ENCODE measurements at regions of chr11 and their contacts with region 1.

Region 1: DNA sequence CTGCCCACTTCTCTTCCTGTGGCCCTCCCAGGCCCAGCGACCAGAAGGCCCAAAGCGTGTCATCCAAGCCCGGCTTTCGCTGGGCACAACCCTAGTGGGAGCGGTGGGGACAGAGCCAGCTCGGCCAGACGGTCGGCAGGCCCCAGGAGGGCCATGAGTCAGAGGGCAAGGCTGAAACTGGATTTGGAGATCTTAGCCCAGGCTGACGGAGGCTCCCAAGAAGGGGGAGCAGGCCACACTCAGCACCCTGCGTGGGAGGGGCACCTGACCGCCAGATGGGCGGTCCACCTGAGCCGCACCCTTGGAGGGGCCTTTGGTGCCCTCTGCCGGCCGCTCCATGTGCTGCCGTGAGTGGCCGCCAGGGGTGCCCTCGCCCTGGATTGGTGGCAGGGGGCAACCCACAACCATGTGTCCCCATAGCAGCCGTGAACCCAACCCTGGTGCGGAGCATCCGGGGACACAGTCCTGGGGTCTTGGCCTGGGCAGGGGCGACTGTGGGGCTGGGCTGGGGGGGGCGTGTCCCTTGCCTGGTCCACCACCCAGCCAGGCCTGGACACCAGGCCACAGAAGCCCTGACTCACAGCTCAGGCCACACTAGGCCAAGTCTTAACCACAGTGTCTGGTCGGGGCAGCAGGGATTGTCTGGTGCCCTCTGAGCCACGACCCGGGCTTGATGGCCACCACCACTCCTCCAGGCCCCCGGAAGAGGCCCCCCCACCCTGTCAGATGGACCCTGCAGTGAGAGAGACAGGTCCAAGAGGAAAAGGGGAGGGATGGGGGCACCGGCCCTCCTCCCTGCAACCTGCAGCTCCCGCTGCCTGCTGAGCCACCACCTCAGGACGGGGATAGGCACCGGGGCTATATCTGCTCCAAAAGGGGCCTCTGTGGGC is 19.2 kb upstream of the TALDO1 start:
- DNase-seq: peak; percentile 79
- ATAC-seq: peak; percentile 85
- H3K4me3 Mint-ChIP-seq: no peak overlapping the region
- H3K27ac Mint-ChIP-seq: no peak overlapping the region
- H3K4me1 Mint-ChIP-seq: peaks cover 8% of the 10 kb centered on the region
- H3K27me3 Mint-ChIP-seq: peaks cover 5% of the 10 kb centered on the region
- CTCF ChIP-seq: peak; percentile 91

Region 2: DNA sequence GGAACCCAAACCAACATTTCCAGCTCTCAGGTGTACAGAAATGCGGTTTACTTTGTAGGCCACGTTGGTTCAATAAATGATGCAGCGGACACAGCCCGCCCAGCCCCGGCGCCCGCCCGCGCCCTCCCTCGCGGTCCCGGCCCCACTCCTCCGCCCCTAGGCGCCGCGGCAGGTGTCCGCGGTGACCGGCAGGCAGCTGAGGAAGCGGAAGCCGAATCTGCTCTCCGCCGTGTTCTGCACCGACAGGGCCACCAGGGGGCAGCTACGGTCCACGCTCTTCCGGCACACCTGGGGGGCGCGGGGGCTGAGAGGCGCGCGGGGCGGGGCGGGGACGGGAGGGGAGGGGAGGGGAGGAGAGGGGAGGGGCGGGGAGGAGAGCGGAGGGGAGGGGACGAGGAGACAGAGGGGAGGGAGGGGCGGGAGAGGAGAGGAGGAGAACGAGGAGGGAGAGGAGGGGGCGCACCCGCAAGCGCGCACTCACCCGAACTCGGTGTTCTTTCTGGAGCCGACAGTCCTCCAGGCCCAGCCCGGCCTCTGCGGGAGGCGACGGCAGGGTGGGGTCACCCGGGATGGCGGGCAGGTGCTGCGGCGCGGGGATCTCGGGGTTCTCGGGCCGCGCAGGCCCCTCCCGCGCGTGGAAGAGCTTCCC is 173.2 kb before region 1 on chr11:
- CTCF ChIA-PET with region 1: interaction called, 24 read pairs
- POLR2A ChIA-PET with region 1: interaction called, 11 read pairs
- intact Hi-C with region 1: loop called (anchors 1 kb)
- DNase-seq: peak; percentile 70
- ATAC-seq: peak; percentile 93
- H3K4me3 Mint-ChIP-seq: peak overlapping the region; percentile 24
- H3K27ac Mint-ChIP-seq: no peak overlapping the region
- H3K4me1 Mint-ChIP-seq: peaks cover 6% of the 10 kb centered on the region
- H3K27me3 Mint-ChIP-seq: no peaks in the 10 kb centered on the region
- CTCF ChIP-seq: no peak

Region 3: GRCh38 chr11:560305-561147 is 167.6 kb before region 1 on chr11 and contains the starts of genes LMNTD2 and RASSF7:
- CTCF ChIA-PET with region 1: interaction called, 24 read pairs
- POLR2A ChIA-PET with region 1: interaction called, 11 read pairs
- intact Hi-C with region 1: loop called (anchors 1 kb)
- DNase-seq: peak; percentile 97
- ATAC-seq: peak; percentile 96
- H3K4me3 Mint-ChIP-seq: peak within 1 kb of the TSS; percentile 84
- H3K27ac Mint-ChIP-seq: peak within 1 kb of the TSS; percentile 59
- H3K4me1 Mint-ChIP-seq: peaks cover 17% of the 10 kb centered on the region
- H3K27me3 Mint-ChIP-seq: no peaks in the 10 kb centered on the region
- CTCF ChIP-seq: no peak
- total RNA-seq, gene LMNTD2: 8.6 and 9.1 TPM in 2 replicates
- total RNA-seq, gene RASSF7: 14.2 and 14.9 TPM in 2 replicates

Region 4: DNA sequence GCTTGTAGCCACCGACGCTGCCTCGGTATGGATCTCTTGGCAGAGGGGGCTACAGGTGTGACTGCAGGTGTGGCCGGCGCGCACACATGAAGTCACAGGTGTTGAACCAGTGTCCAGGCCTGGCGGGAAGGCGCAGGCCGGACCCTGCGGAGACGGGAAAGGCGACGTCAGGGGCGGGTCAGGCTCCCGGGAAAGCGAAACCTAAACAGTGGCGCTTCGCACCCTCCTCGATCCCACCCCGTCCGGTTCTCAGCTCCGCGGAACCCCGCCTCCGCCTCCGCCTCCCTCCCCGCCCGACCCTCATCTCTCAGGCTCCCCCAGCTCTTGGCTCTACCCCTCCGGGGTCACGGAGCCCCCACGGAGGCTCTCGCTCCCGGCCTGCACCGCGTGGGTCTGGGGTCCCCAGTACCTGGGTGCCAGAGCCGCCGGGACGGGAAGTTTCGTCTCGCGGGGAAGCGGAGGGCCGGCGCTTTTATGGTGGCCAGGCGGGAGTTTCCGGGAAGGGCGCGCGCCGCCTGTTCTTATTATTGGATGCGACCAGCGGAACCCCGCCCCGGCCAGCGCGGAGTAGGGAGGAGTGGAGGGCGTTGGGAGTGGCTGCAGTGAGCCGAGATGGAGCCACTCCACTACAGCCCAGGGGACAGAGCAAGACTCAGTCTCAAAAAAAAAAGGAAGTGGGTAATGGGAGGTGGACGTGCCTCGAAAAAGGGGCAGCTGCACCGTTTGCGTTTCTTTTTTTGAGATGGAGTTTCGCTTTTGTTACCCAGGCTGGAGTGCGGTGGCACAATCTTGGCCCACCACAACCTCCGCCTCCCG is 112.4 kb before region 1 on chr11 and contains the start of gene IRF7:
- CTCF ChIA-PET with region 1: no interaction called
- POLR2A ChIA-PET with region 1: no interaction called
- intact Hi-C with region 1: loop called (anchors 5 kb)
- DNase-seq: peak; percentile 92
- ATAC-seq: peak; percentile 95
- H3K4me3 Mint-ChIP-seq: peak within 1 kb of the TSS; percentile 90
- H3K27ac Mint-ChIP-seq: peak within 1 kb of the TSS; percentile 88
- H3K4me1 Mint-ChIP-seq: peaks cover 25% of the 10 kb centered on the region
- H3K27me3 Mint-ChIP-seq: no peaks in the 10 kb centered on the region
- CTCF ChIP-seq: no peak
- total RNA-seq, gene IRF7: 74.1 and 75.5 TPM in 2 replicates

Region 5: GRCh38 chr11:662689-663274 is 65.3 kb before region 1 on chr11:
- CTCF ChIA-PET with region 1: interaction called, 34 read pairs
- POLR2A ChIA-PET with region 1: no interaction called
- intact Hi-C with region 1: loop called (anchors 1 kb)
- DNase-seq: peak; percentile 51
- ATAC-seq: peak; percentile 85
- H3K4me3 Mint-ChIP-seq: no peak overlapping the region
- H3K27ac Mint-ChIP-seq: no peak overlapping the region
- H3K4me1 Mint-ChIP-seq: peaks cover 4% of the 10 kb centered on the region
- H3K27me3 Mint-ChIP-seq: no peaks in the 10 kb centered on the region
- CTCF ChIP-seq: no peak

Region 6: GRCh38 chr11:747158-748006 is 19.3 kb after region 1 on chr11 and contains the start of gene TALDO1:
- CTCF ChIA-PET with region 1: interaction called, 7 read pairs
- POLR2A ChIA-PET with region 1: interaction called, 9 read pairs
- intact Hi-C with region 1: loop called (anchors 2 kb)
- DNase-seq: peak; percentile 91
- ATAC-seq: peak; percentile 91
- H3K4me3 Mint-ChIP-seq: peak within 1 kb of the TSS; percentile 86
- H3K27ac Mint-ChIP-seq: peak within 1 kb of the TSS; percentile 82
- H3K4me1 Mint-ChIP-seq: peaks cover 24% of the 10 kb centered on the region
- H3K27me3 Mint-ChIP-seq: no peaks in the 10 kb centered on the region
- CTCF ChIP-seq: no peak
- total RNA-seq, gene TALDO1: 194 and 244 TPM in 2 replicates

Region 7: DNA sequence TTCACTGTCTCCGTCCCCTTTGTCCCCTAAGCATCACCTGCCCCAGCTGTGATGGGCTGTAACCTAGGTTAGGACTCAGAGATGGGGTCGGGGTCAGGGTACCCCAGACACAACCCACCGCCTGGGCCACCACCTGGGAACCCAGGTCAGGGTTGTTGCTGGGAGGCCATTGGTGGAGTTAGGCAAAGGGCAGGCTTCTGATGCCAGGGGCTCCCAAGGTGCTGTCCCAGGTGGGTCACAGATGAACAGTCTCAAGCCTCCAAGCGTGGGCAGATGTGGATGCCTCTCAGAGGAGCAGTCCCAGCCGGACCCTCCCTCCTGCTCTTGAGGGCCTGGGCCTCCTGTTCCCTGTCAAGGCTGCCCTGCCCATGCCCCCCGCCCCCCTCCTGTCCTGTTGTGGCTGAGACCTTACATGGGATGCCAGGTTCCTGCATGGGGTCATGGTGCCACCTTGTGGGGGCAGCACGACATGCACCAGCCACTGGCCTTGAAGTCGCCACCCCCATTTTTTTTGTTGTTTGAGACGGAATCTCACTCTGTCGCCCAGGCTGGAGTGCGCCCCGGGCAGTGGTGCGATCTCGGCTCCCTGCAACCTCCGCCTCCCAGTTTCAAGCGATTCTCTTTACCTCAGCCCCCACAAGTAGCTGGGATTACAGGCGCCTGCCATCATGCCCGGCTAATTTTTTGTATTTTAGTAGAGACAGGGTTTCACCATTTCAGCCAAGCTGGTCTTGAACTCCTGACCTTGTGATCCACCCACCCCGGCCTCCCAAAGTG is 37.1 kb after region 1 on chr11:
- CTCF ChIA-PET with region 1: no interaction called
- POLR2A ChIA-PET with region 1: no interaction called
- intact Hi-C with region 1: loop called (anchors 1 kb)
- DNase-seq: peak; percentile 55
- ATAC-seq: peak; percentile 91
- H3K4me3 Mint-ChIP-seq: no peak overlapping the region
- H3K27ac Mint-ChIP-seq: no peak overlapping the region
- H3K4me1 Mint-ChIP-seq: peaks cover 3% of the 10 kb centered on the region
- H3K27me3 Mint-ChIP-seq: no peaks in the 10 kb centered on the region
- CTCF ChIP-seq: no peak

Measured in activated B cell treated with CpG ODN at 0.5 μM for 24 hours (primary cell).